ENCODE measurements at regions of chr10 and their contacts with region 1.

Region 1: GRCh38 chr10:74176380-74177139 is 25.5 kb downstream of the ADK start:
- DNase-seq: peak; percentile 92
- ATAC-seq: peak; percentile 97
- H3K4me3 ChIP-seq: peak overlapping the region; percentile 70 to 96 (median 79)
- H3K27ac ChIP-seq: peak overlapping the region; percentile 99
- H3K4me1 ChIP-seq: peaks cover 52% of the 10 kb centered on the region
- H3K27me3 ChIP-seq: no peaks in the 10 kb centered on the region
- CTCF ChIP-seq: 0 out of 2 replicates have a peak, but pooled peaks have one; percentile 7
- EP300 ChIP-seq: peak in 1 of 2 experiments; percentile 26; a peak in 1 of 4 replicates
- POLR2A ChIP-seq: peak; percentile 89 to 90
- RAD21 ChIP-seq: no peak; the same call in 1 of the 2 replicates

Region 2: GRCh38 chr10:74006269-74006668 is 170.3 kb before region 1 on chr10:
- CTCF ChIA-PET with region 1: no interaction called
- POLR2A ChIA-PET with region 1: no interaction called
- in situ Hi-C with region 1: no loop called
- intact Hi-C with region 1: no loop called
- DNase-seq: no peak
- ATAC-seq: peak; percentile 45; the same call in 2 of the 3 replicates
- H3K4me3 ChIP-seq: no peak overlapping the region
- H3K27ac ChIP-seq: no peak overlapping the region
- H3K4me1 ChIP-seq: peaks cover 7% of the 10 kb centered on the region
- H3K27me3 ChIP-seq: no peaks in the 10 kb centered on the region
- CTCF ChIP-seq: no peak
- EP300 ChIP-seq: no peak
- POLR2A ChIP-seq: no peak
- RAD21 ChIP-seq: no peak

Region 3: DNA sequence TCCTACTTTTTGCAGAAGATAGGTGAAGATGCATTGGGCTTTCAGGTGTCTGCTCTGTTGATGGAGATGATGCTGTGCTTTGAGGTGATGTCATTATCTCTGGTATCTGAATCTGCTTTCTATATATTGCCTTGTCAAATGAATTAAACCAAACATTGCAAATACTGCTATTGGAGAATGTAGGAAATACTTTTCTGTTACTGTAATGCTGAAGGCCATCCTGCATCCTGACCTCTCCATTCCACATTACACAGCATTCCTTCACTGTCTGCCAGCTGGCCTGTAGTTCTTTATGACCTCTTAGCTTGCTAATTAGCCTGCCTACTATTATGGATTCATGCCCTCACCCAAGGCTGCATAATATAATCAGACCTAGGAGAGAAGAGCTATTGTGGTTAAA is 105.4 kb before region 1 on chr10:
- CTCF ChIA-PET with region 1: no interaction called
- POLR2A ChIA-PET with region 1: no interaction called
- in situ Hi-C with region 1: no loop called
- intact Hi-C with region 1: no loop called
- DNase-seq: no peak
- ATAC-seq: no peak
- H3K4me3 ChIP-seq: no peak overlapping the region
- H3K27ac ChIP-seq: no peak overlapping the region
- H3K4me1 ChIP-seq: no peaks in the 10 kb centered on the region
- H3K27me3 ChIP-seq: no peaks in the 10 kb centered on the region
- CTCF ChIP-seq: no peak
- EP300 ChIP-seq: no peak
- POLR2A ChIP-seq: no peak
- RAD21 ChIP-seq: no peak

Region 4: GRCh38 chr10:74151056-74151878 is 25.3 kb before region 1 on chr10 and contains the start of gene ADK:
- CTCF ChIA-PET with region 1: no interaction called
- POLR2A ChIA-PET with region 1: interaction called, 45 read pairs
- in situ Hi-C with region 1: no loop called
- intact Hi-C with region 1: loop called (anchors 2 kb)
- DNase-seq: peak; percentile 96
- ATAC-seq: peak; percentile 90
- H3K4me3 ChIP-seq: peak within 1 kb of the TSS; percentile 80 to 96 (median 91)
- H3K27ac ChIP-seq: peak within 1 kb of the TSS; percentile 95
- H3K4me1 ChIP-seq: peaks cover 51% of the 10 kb centered on the region
- H3K27me3 ChIP-seq: peaks cover 0 to 4% of the 10 kb centered on the region in 2 experiments; a peak in 1 of 5 replicates
- CTCF ChIP-seq: peak; percentile 56
- EP300 ChIP-seq: no peak
- POLR2A ChIP-seq: peak; percentile 91 to 97
- RAD21 ChIP-seq: peak; percentile 58
- total RNA-seq, gene ADK: 79.1 and 129 TPM in 2 replicates

Region 5: DNA sequence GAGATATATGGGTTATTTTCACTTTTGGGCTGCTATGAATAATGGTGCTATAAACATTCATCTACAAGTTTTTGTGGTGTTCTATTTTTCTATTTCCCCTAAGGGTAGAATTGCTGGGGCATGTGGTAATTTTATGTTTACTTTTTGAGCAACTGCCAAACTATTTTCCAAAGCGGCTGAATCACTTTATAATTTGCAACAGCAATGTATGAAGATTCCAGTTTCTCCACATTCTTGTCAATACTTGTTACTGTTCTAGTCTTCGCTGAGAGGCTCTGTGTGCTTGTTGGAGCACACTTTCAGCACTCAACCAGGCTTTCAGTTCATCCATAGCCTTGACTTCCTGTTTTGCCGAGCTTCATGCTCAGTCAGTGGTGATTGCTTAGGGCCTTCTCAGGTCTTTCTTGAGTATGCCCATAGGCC is 13.4 kb after region 1 on chr10:
- CTCF ChIA-PET with region 1: no interaction called
- POLR2A ChIA-PET with region 1: interaction called, 13 read pairs
- in situ Hi-C with region 1: no loop called
- intact Hi-C with region 1: no loop called
- DNase-seq: peak; percentile 69
- ATAC-seq: peak; percentile 91
- H3K4me3 ChIP-seq: peak overlapping the region in 2 of 3 experiments; percentile 20 to 41; a peak in 4 of 6 replicates
- H3K27ac ChIP-seq: peak overlapping the region; percentile 68
- H3K4me1 ChIP-seq: peaks cover 55% of the 10 kb centered on the region
- H3K27me3 ChIP-seq: no peaks in the 10 kb centered on the region
- CTCF ChIP-seq: no peak
- EP300 ChIP-seq: no peak
- POLR2A ChIP-seq: no peak
- RAD21 ChIP-seq: no peak

Region 6: GRCh38 chr10:74486659-74487058 is 310.1 kb after region 1 on chr10:
- CTCF ChIA-PET with region 1: no interaction called
- POLR2A ChIA-PET with region 1: no interaction called
- in situ Hi-C with region 1: no loop called
- intact Hi-C with region 1: no loop called
- DNase-seq: no peak
- ATAC-seq: no peak
- H3K4me3 ChIP-seq: no peak overlapping the region
- H3K27ac ChIP-seq: no peak overlapping the region
- H3K4me1 ChIP-seq: peaks cover 15% of the 10 kb centered on the region
- H3K27me3 ChIP-seq: no peaks in the 10 kb centered on the region
- CTCF ChIP-seq: no peak
- EP300 ChIP-seq: no peak
- POLR2A ChIP-seq: no peak
- RAD21 ChIP-seq: no peak

Measured in HepG2 (cell line).